ENCODE measurements at regions of chr10 and their contacts with region 1.

Region 1: GRCh38 chr10:129123428-129123827 is 343.6 kb upstream of the MGMT start:
- DNase-seq: no peak
- H3K4me3 ChIP-seq: no peak overlapping the region
- H3K27ac ChIP-seq: no peak overlapping the region
- H3K4me1 ChIP-seq: no peaks in the 10 kb centered on the region
- H3K27me3 ChIP-seq: no peaks in the 10 kb centered on the region
- CTCF ChIP-seq: no peak
- POLR2A ChIP-seq: no peak

Region 2: DNA sequence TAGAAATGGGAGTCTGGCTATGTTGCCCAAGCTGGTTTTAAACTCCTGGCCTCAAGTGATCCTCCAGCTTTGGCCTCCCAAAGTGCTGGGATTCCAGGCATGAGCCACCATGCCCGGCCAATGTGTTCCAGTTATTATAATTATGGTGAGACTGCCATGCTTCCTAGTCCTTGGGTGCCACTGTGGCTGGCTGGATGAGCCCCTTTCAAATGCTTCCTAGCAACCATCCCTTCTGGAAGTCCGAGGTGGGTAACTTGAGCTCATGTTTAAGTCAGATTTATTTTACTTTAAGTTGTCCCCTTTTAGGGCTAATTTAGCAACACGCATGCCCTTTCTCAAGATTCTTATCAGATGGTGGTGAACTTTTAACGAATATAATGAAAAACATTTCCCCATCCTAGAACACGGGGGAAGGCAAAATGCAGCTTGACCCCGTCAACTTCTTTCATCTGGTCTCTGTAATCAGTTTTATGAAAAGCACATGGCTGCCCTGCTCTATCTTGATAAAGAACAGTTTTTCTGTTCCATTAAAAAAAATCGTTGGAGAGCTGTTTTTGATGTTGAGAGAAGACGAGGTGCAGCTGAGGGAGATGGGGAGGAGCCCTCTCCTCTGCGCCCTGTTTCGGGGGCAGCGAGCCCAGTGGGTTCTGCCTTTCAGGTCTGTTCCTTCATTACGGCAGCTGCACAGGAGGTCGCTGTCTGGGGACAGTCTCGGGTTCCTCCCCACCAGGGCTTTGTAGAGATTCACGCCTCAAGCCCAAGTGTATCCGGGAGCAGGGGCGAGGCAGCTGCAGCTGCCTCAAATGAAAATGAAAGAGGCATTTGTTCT is 936.3 kb before region 1 on chr10:
- intact Hi-C with region 1: loop called (anchors 5 kb)
- DNase-seq: no peak
- H3K4me3 ChIP-seq: peak overlapping the region in 2 of 3 donors; percentile 1 to 46
- H3K27ac ChIP-seq: no peak overlapping the region
- H3K4me1 ChIP-seq: no peaks in the 10 kb centered on the region
- H3K27me3 ChIP-seq: no peaks in the 10 kb centered on the region
- CTCF ChIP-seq: no peak
- POLR2A ChIP-seq: no peak

Region 3: DNA sequence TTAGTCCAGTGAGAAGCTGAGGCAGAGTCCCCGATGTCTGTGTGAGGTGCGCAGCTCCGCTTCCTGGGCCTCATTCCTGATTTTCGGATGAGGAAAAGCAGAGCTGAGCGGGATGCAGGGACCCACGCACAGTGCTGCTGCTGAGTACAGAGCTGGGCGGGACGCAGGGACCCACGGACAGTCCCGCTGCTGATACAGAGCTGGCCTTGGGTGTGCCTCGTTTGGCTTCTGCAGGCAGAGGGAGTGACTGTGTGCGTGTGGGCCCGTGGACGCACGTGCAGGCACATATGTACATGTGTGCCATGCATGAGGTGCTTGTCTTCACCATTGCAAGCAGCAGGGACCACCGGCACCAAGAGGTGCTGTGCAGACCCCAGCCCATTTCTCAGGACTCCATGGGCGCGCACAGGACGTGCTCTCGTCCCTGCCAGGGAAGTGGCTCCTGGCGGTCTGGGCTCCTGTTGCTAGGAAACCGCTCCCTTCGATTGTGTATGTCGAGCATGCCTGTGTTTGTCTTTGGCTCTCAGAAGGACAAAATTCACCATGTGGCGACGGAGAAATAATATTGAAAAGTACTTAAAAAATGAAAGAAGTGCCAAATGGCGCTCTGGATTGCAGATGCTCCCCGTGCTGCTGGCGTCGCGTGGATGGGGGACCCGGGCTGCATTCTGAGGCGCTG is 693.5 kb before region 1 on chr10:
- intact Hi-C with region 1: loop called (anchors 5 kb)
- DNase-seq: no peak
- H3K4me3 ChIP-seq: no peak overlapping the region
- H3K27ac ChIP-seq: no peak overlapping the region
- H3K4me1 ChIP-seq: no peaks in the 10 kb centered on the region
- H3K27me3 ChIP-seq: peaks cover 0 to 16% of the 10 kb centered on the region in 2 donors
- CTCF ChIP-seq: no peak
- POLR2A ChIP-seq: no peak

Region 4: GRCh38 chr10:129035052-129035827 is 88.2 kb before region 1 on chr10:
- intact Hi-C with region 1: no loop called
- DNase-seq: no peak
- H3K4me3 ChIP-seq: no peak overlapping the region
- H3K27ac ChIP-seq: peak overlapping the region in 1 of 2 donors; percentile 2
- H3K4me1 ChIP-seq: no peaks in the 10 kb centered on the region
- H3K27me3 ChIP-seq: peaks cover 0 to 26% of the 10 kb centered on the region in 2 donors
- CTCF ChIP-seq: no peak
- POLR2A ChIP-seq: no peak